Right cardiac atrium (tissue), 5 donors: ENCODE measurements at regions of chr6 and their contacts with region 1.

Region 1: GRCh38 chr6:4936681-4937041 is 67.2 kb downstream of the RPP40 start:
- DNase-seq: no peak
- ATAC-seq: peak in 1 of 2 donors; percentile 42
- H3K4me3 ChIP-seq: no peak overlapping the region
- H3K27ac ChIP-seq: no peak overlapping the region
- H3K4me1 ChIP-seq: peaks cover 8% of the 10 kb centered on the region
- H3K27me3 ChIP-seq: no peaks in the 10 kb centered on the region

Region 2: DNA sequence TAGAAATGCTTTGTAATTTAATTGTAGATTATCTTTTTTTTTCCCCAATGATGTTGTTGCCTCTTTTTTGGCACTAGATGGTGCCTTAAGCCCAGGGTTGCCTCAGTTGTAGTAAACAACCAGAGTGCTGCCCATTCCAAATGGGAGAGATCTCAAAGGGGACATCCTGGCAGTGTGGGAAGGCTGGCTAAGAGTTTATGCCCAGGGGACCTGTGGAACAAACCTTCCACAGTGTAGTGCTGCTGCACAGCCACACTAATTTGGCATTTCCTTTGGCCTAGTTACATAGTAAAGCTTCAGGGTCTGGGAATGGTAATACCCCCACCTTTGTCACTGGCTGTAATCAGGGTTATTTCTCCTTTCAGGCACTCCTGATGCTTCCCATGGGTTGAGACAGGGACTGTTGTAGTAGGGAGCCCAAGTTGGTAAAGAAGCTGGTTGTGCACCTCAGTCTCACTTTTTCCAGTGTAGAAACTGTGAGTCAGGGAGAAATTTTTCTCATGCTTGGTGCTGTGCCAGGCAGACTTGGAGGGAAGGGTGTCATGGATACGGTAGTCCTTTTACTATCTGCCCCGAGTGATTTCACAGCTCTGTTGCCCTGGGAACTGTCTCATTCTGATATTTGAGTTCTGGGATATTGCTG is 623.5 kb before region 1 on chr6:
- intact Hi-C with region 1: loop called in 1 of 4 experiments (anchors 10 kb)
- DNase-seq: peak; percentile 53 to 62 (median 61)
- ATAC-seq: peak; percentile 66 to 83
- H3K4me3 ChIP-seq: no peak overlapping the region
- H3K27ac ChIP-seq: no peak overlapping the region
- H3K4me1 ChIP-seq: no peaks in the 10 kb centered on the region
- H3K27me3 ChIP-seq: no peaks in the 10 kb centered on the region

Region 3: DNA sequence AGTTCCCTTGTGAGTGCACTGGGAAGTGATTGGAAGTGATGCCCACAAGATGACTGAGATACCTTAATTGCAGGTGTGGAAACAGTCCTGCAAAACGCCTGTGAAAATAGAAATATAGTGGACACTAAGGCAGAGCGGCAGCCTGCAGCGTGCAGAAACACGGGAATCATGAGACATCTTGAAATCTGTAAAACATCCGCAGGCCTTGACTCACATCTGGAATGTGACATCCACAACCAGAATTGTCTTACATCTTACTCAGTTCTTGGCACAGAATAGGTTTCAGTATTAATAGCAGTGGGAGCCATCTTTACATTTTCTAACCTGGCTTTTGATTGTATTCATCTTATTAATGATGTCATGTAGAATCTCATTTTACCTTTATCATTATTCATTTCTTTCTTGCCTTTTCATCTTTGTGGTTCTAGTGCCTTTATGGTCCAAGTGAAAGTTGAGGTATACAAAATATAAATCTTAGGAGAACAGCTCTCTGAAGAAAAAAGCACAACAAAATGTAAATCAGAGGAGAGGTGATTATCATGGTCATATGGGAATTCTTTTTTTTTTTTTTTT is 115.9 kb before region 1 on chr6:
- intact Hi-C with region 1: no loop called
- DNase-seq: no peak
- ATAC-seq: no peak
- H3K4me3 ChIP-seq: no peak overlapping the region
- H3K27ac ChIP-seq: no peak overlapping the region
- H3K4me1 ChIP-seq: peaks cover 3% of the 10 kb centered on the region
- H3K27me3 ChIP-seq: no peaks in the 10 kb centered on the region